Activated naive CD8-positive, alpha-beta T cell treated with anti-CD3 and anti-CD28 coated beads, Interleukin-2, amount 10 ng/mL, durations not matched to agents 7 days and 5 days (primary cell): ENCODE measurements at regions of chr19 and their contacts with region 1.

Region 1: DNA sequence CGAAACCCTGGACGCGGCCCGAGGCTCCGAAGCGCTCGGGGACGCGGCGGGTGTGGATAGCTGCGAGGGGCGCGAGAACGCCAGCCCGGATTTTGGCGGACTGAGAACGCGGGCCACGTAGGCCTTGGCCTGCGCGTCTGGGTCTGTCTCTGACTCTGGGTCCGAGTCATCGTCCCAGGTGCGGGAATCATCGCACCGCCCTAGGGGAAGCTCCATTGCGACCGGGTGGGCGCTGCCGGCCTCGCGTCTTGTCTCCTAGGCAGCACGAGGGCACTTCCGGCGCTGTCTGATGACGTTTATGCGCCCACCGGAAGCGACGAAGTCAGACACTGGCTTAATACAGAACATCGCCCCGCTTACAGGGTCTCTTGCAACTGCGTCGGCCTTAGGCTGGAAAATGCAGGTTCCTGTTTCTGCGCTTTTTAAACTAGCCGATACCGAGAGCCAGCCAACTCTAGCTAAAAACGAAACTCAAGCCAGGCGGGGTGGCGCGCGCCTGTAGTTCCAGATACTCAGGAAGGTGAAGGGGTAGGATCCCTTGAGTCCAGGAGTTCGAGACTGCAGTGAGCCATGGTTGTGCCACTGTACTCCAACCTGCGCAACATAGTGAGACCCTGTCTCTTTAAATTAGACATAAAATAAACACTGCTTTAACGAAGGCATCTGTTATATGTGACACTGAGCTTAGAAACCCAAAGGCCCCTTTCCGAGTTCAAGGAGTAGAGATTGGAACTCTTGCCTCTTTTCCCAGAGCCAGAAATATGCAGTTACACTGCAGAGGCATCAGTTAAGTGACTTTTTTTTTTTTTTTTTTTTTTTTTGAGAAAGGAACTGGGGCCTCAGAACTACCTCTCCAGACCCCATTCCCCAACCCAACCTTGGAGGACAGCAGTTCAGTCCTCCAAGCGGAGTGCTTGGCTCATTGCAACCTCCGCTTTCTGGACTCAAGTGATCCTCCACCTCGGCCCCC is at the start of gene FBXW9:
- DNase-seq: peak; percentile 98
- ATAC-seq: peak; percentile 84
- H3K4me3 Mint-ChIP-seq: peak within 1 kb of the TSS; percentile 93
- H3K27ac Mint-ChIP-seq: peak within 1 kb of the TSS; percentile 97
- H3K4me1 Mint-ChIP-seq: peaks cover 10% of the 10 kb centered on the region
- H3K27me3 Mint-ChIP-seq: no peaks in the 10 kb centered on the region
- total RNA-seq, gene FBXW9: 4.9 to 5.3 TPM

Region 2: DNA sequence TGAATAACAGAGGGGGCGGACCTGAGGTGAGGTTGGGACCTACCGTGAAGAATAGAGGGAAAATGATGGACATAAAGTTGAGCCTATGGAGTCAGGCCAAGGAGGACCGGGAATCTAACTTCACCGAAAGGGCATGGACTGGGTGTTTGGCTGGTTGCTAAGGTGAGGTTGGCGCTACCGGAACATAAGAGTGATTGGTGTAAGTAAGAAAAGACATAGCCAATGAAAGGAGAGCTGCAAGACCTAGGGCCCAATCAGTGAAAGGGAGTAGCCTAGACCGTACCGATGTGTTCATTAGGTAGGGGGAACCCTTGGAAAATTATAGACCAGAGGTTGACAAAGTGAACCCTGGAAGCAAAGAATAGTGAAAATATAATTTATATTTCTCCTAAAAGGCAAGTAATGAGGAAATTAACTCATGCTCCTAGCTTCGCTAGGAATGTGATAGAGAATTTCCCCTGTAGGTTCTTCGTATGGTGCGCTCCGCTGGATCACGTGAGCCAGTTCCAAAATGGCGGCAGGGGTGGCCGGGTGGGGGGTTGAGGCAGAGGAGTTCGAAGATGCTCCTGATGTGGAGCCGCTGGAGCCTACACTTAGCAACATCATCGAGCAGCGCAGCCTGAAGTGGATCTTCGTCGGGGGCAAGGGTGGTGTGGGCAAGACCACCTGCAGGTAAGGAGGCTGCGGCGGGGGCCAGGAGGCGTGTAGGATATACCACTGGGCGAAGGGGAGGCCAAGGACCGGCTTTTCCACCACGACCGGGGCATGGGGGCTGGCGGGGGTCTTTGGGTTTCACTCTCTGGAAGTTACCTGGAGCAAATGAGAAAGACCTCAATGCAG is 40.6 kb after region 1 on chr19 and contains the start of gene GET3:
- POLR2A ChIA-PET with region 1: interaction called, 13 read pairs
- DNase-seq: peak; percentile 80
- ATAC-seq: peak; percentile 83
- H3K4me3 Mint-ChIP-seq: peak within 1 kb of the TSS; percentile 100
- H3K27ac Mint-ChIP-seq: peak within 1 kb of the TSS; percentile 98
- H3K4me1 Mint-ChIP-seq: peaks cover 24% of the 10 kb centered on the region
- H3K27me3 Mint-ChIP-seq: no peaks in the 10 kb centered on the region
- total RNA-seq, gene GET3: 46.4 to 47.2 TPM